Dorsolateral prefrontal cortex (tissue), 120 donors: ENCODE measurements at regions of chr15 and their contacts with region 1.

Region 1: DNA sequence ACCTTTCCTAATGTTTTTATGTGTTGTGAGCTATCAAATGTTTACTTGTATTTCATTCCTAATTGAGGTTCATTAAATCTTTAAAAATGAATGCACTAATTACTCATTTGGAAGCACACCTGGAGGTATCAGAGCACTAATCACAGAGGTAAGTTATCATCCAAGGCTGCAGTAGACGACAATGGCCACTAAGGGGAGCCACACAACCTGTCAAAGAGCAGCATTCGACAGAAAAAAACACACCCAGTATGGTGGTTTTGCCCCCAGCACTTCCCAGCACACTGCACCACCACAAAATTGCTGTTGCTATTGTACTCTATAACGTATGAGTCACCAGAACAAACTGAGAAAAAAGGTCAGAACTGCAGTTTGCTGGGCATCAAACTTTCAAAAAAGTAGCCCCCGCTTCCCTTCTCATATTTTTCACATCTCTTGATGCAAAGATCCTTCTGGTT is 205.9 kb upstream of the IGF1R start:
- DNase-seq: peak in 5 of 10 donors; percentile 32 to 68 (median 62)
- H3K4me3 ChIP-seq: no peak overlapping the region
- H3K27ac ChIP-seq: no peak overlapping the region
- H3K27me3 ChIP-seq: peaks cover 0 to 11% (median 0%) of the 10 kb centered on the region in 45 donors
- CTCF ChIP-seq: peak; percentile 57 to 87 (median 77)

Region 2: DNA sequence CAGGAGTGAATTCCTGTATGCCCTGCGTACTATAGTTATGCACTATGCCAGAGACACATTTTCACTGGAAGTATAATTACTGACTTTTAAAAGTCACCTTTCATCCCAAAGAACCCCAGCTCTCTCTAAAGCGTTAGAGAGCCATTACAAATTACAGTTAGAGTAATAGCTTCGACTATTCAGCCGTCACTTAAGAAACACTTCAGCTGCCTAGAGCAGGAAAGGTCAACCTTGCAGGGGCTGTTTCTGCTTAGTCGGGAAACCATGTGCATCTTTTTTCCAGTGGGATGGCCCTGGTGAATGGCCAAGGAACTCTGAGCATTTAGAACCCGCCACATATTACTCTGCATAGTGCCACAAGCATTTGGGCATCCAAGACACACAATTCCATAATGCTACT is 246.0 kb before region 1 on chr15:
- intact Hi-C with region 1: no loop called
- DNase-seq: no peak
- H3K4me3 ChIP-seq: no peak overlapping the region
- H3K27ac ChIP-seq: no peak overlapping the region
- H3K27me3 ChIP-seq: peaks cover 0 to 75% (median 16%) of the 10 kb centered on the region in 45 donors
- CTCF ChIP-seq: no peak

Region 3: DNA sequence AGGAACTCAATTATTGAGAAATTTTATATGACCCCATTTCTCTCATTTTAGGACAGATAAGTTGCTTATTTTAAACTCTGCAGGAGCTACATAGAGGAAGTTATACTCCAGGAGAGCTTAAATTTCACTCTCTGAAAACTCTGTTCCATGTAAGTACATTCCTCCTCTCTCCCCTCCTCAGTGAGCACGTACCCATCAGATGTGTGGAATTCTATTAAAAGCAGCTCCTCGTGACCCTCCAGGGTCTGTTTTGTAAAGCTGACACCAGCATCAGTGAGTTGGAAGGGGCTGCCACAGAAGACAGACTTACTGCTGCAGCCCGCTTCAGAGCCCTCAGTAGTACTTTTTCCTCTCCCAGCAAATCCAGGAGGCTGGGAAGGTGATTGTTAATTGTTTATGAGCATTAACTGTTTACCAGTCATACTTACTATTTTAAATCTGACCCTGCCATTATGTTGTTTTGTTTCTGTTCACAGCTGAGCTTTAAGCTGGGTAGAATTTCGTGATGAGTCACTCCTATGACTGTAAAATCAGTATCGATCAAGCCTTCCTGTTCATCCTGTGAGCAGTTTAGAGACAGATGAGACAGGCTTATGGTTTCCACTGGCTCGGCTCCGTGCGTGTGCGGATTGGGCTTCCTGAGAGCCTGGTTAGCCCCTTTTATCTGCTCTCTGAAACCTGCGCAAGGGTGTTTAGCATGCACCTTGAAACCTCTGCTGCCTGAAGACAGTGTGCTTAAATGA is 226.3 kb after region 1 on chr15:
- intact Hi-C with region 1: loop called in 1 of 2 experiments (anchors 10 kb)
- DNase-seq: no peak
- H3K4me3 ChIP-seq: peak overlapping the region in 1 of 59 donors; percentile 8
- H3K27ac ChIP-seq: peak overlapping the region in 8 of 59 donors; percentile 1 to 64 (median 22)
- H3K27me3 ChIP-seq: no peaks in the 10 kb centered on the region
- CTCF ChIP-seq: no peak

Region 4: DNA sequence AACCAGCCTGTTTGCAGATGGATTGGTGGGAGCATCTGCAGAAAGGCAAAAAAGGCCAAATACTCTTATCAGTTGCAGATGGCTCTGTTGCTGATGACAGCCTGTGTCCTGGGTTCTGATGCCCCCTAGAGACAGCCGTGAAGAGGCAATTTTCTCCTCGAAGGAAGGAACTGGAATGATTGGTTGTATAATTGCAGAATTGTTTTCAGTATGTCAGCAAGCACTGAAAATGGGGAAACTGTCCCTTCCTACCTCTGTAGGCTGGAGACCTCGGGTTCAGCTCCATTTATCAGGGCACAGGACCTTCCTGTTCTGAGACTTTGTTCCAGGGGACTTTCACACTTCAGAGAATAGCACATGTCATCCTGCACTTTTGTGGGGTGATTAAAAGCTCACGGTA is 462.1 kb after region 1 on chr15:
- intact Hi-C with region 1: loop called in 1 of 2 experiments (anchors 10 kb)
- DNase-seq: peak in 7 of 10 donors; percentile 31 to 64 (median 55)
- H3K4me3 ChIP-seq: no peak overlapping the region
- H3K27ac ChIP-seq: peak overlapping the region in 53 of 59 donors; percentile 9 to 91 (median 60)
- H3K27me3 ChIP-seq: no peaks in the 10 kb centered on the region
- CTCF ChIP-seq: peak; percentile 20 to 82 (median 69)